ENCODE measurements at regions of chr21 and their contacts with region 1.

Region 1: GRCh38 chr21:37658817-37659458 is 257.3 kb downstream of the KCNJ6 start:
- DNase-seq: no peak
- H3K4me3 ChIP-seq: no peak overlapping the region
- H3K4me3 Mint-ChIP-seq: no peak overlapping the region
- H3K27ac ChIP-seq: no peak overlapping the region
- H3K27ac Mint-ChIP-seq: peak overlapping the region in 1 of 7 donors; percentile 52
- H3K4me1 ChIP-seq: no peaks in the 10 kb centered on the region
- H3K4me1 Mint-ChIP-seq: peaks cover 0 to 1% (median 0%) of the 10 kb centered on the region in 4 donors
- H3K27me3 ChIP-seq: no peaks in the 10 kb centered on the region
- H3K27me3 Mint-ChIP-seq: peaks cover 9 to 22% of the 10 kb centered on the region in 2 donors

Region 2: GRCh38 chr21:37675202-37675801 is 16.4 kb after region 1 on chr21:
- CTCF ChIA-PET with region 1: interaction called, 12 read pairs
- POLR2A ChIA-PET with region 1: no interaction called
- intact Hi-C with region 1: no loop called
- DNase-seq: peak in 4 of 5 donors; percentile 22 to 42 (median 33)
- H3K4me3 ChIP-seq: no peak overlapping the region
- H3K4me3 Mint-ChIP-seq: peak overlapping the region in 1 of 8 donors; percentile 26
- H3K27ac ChIP-seq: no peak overlapping the region
- H3K27ac Mint-ChIP-seq: no peak overlapping the region
- H3K4me1 ChIP-seq: peaks cover 6% of the 10 kb centered on the region
- H3K4me1 Mint-ChIP-seq: peaks cover 0 to 3% (median under 1%) of the 10 kb centered on the region in 4 donors
- H3K27me3 ChIP-seq: no peaks in the 10 kb centered on the region
- H3K27me3 Mint-ChIP-seq: peaks cover 11 to 22% of the 10 kb centered on the region in 2 donors

Measured in CD4-positive, alpha-beta memory T cell (primary cell).